Sigmoid colon (tissue), 7 donors: ENCODE measurements at regions of chr2 and their contacts with region 1.

Region 1: GRCh38 chr2:196291873-196292800 is 120.8 kb upstream of the STK17B start:
- DNase-seq: no peak
- H3K4me3 ChIP-seq: no peak overlapping the region
- H3K27ac ChIP-seq: no peak overlapping the region
- H3K4me1 ChIP-seq: no peaks in the 10 kb centered on the region
- H3K27me3 ChIP-seq: no peaks in the 10 kb centered on the region
- CTCF ChIP-seq: no peak
- EP300 ChIP-seq: no peak
- POLR2A ChIP-seq: no peak

Region 2: DNA sequence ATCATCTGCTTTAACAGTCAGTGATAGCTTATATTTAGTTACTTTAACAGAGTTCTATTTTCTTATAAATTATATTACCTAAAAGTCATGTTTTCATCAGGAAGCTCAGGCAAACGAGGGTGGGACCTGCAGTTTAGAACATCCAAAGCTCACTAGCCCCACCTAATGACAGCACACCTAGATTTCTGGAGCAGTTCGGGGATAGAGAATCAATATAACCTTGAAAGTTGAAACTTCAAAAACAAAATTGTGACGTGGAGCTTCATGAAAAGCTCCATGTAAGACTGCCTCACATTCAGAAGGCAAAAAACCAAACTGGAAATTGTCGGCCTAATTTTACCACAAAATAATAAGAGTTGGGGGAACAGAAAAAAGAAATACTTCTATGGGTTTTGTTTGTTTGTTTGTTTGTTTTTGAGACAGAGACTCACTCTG is 161.5 kb after region 1 on chr2:
- intact Hi-C with region 1: loop called (anchors 10 kb)
- DNase-seq: no peak
- H3K4me3 ChIP-seq: no peak overlapping the region
- H3K27ac ChIP-seq: no peak overlapping the region
- H3K4me1 ChIP-seq: no peaks in the 10 kb centered on the region
- H3K27me3 ChIP-seq: no peaks in the 10 kb centered on the region
- CTCF ChIP-seq: peak in 1 of 4 experiments; percentile 35
- EP300 ChIP-seq: no peak
- POLR2A ChIP-seq: no peak